WTC11 (cell line): ENCODE measurements at regions of chr12 and their contacts with region 1.

Region 1: GRCh38 chr12:52069327-52070184 is at the start of gene ATG101:
- DNase-seq: peak; percentile 91
- ATAC-seq: peak; percentile 98
- H3K4me3 Mint-ChIP-seq: peak within 1 kb of the TSS; percentile 97
- H3K27ac Mint-ChIP-seq: peak within 1 kb of the TSS; percentile 99
- H3K4me1 Mint-ChIP-seq: peaks cover 14% of the 10 kb centered on the region
- H3K27me3 Mint-ChIP-seq: peaks cover 9% of the 10 kb centered on the region
- CTCF ChIP-seq: no peak
- total RNA-seq, gene ATG101: 43.3 to 52.1 TPM (median 45.0 TPM) in 3 replicates

Region 2: DNA sequence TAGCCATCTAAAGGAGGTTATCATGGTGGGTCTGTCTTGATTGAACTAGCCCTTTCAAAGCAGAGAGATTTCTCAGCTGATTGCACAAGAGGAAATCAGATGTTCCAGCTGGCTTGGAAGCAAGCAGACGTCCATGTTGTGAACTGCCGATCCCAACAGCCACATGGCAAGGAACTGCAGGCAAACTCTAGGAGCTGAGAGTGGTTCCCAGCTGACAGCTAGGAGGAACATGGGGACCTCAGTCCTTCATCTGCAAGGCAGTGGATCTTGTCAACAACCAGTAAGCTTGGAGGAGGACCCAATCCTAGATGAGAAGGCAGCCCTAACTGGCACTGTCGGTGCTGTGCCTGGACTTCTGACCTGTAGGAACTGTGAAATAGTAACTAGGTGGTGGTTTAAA is 110.3 kb before region 1 on chr12:
- CTCF ChIA-PET with region 1: no interaction called
- POLR2A ChIA-PET with region 1: no interaction called
- DNase-seq: no peak
- ATAC-seq: no peak
- H3K4me3 Mint-ChIP-seq: no peak overlapping the region
- H3K27ac Mint-ChIP-seq: no peak overlapping the region
- H3K4me1 Mint-ChIP-seq: peaks cover 13% of the 10 kb centered on the region
- H3K27me3 Mint-ChIP-seq: peaks cover 1% of the 10 kb centered on the region
- CTCF ChIP-seq: no peak

Region 3: GRCh38 chr12:52004042-52004648 is 65.4 kb before region 1 on chr12:
- CTCF ChIA-PET with region 1: interaction called, 10 read pairs
- POLR2A ChIA-PET with region 1: no interaction called
- DNase-seq: peak; percentile 74
- ATAC-seq: peak; percentile 39
- H3K4me3 Mint-ChIP-seq: no peak overlapping the region
- H3K27ac Mint-ChIP-seq: no peak overlapping the region
- H3K4me1 Mint-ChIP-seq: peaks cover 20% of the 10 kb centered on the region
- H3K27me3 Mint-ChIP-seq: peaks cover 47% of the 10 kb centered on the region
- CTCF ChIP-seq: peak; percentile 42

Region 4: GRCh38 chr12:52032804-52033502 is 36.6 kb before region 1 on chr12:
- CTCF ChIA-PET with region 1: interaction called, 28 read pairs
- POLR2A ChIA-PET with region 1: interaction called, 17 read pairs
- DNase-seq: peak; percentile 97
- ATAC-seq: peak; percentile 93
- H3K4me3 Mint-ChIP-seq: peak overlapping the region; percentile 69
- H3K27ac Mint-ChIP-seq: peak overlapping the region; percentile 95
- H3K4me1 Mint-ChIP-seq: peaks cover 31% of the 10 kb centered on the region
- H3K27me3 Mint-ChIP-seq: peaks cover 46% of the 10 kb centered on the region
- CTCF ChIP-seq: no peak

Region 5: GRCh38 chr12:52058631-52059361 is 10.8 kb before region 1 on chr12:
- CTCF ChIA-PET with region 1: interaction called, 14 read pairs
- POLR2A ChIA-PET with region 1: no interaction called
- DNase-seq: no peak
- ATAC-seq: no peak
- H3K4me3 Mint-ChIP-seq: no peak overlapping the region
- H3K27ac Mint-ChIP-seq: no peak overlapping the region
- H3K4me1 Mint-ChIP-seq: no peaks in the 10 kb centered on the region
- H3K27me3 Mint-ChIP-seq: no peaks in the 10 kb centered on the region
- CTCF ChIP-seq: no peak

Region 6: GRCh38 chr12:52171950-52172512 is 102.5 kb after region 1 on chr12:
- CTCF ChIA-PET with region 1: no interaction called
- POLR2A ChIA-PET with region 1: no interaction called
- DNase-seq: peak; percentile 79
- ATAC-seq: peak; percentile 71
- H3K4me3 Mint-ChIP-seq: no peak overlapping the region
- H3K27ac Mint-ChIP-seq: no peak overlapping the region
- H3K4me1 Mint-ChIP-seq: peaks cover 9% of the 10 kb centered on the region
- H3K27me3 Mint-ChIP-seq: no peaks in the 10 kb centered on the region
- CTCF ChIP-seq: 0 out of 2 replicates have a peak, but pooled peaks have one; percentile 25